CD8-positive, alpha-beta T cell (primary cell): ENCODE measurements at regions of chr2 and their contacts with region 1.

Region 1: GRCh38 chr2:200483729-200484198 is 26.1 kb downstream of the KCTD18 start:
- DNase-seq: no peak
- ATAC-seq: no peak
- H3K4me3 ChIP-seq: no peak overlapping the region
- H3K4me3 Mint-ChIP-seq: no peak overlapping the region
- H3K27ac ChIP-seq: no peak overlapping the region
- H3K27ac Mint-ChIP-seq: no peak overlapping the region
- H3K4me1 ChIP-seq: no peaks in the 10 kb centered on the region
- H3K4me1 Mint-ChIP-seq: peaks cover 3% of the 10 kb centered on the region
- H3K27me3 ChIP-seq: no peaks in the 10 kb centered on the region
- H3K27me3 Mint-ChIP-seq: peaks cover 5% of the 10 kb centered on the region
- CTCF ChIP-seq: no peak

Region 2: DNA sequence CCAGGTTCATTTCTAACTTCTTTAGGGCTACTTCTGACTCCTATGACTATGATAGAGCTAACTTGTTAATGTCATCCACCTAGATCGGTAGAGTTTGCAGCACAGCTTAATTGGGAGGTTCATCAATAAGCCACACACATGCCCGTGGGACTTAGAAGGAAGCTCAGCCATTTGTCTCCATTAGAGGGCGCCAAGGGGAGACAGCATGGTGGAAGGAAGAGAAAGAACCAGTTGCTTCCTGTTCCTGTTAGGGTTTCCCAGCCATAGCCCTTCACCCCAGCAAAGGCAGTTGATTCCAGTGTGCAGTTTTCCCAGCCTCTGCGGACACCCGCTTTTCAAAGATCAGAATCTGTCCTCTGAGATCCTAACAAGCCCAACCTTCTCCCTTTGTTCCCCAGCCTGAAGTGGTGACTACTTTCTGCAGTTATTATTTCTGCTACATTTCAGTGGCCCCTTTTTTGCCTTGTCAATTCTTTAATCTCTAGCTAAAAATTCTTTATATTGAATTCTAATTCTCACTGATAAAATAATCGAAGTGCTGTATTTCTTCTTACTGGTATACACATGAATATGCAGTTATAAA is 498.0 kb before region 1 on chr2:
- CTCF ChIA-PET with region 1: interaction called, 40 read pairs
- POLR2A ChIA-PET with region 1: no interaction called
- intact Hi-C with region 1: loop called (anchors 1 kb)
- DNase-seq: peak in 7 of 9 experiments; percentile 14 to 65 (median 35)
- ATAC-seq: peak; percentile 72
- H3K4me3 ChIP-seq: no peak overlapping the region
- H3K4me3 Mint-ChIP-seq: no peak overlapping the region
- H3K27ac ChIP-seq: no peak overlapping the region
- H3K27ac Mint-ChIP-seq: no peak overlapping the region
- H3K4me1 ChIP-seq: no peaks in the 10 kb centered on the region
- H3K4me1 Mint-ChIP-seq: peaks cover 5% of the 10 kb centered on the region
- H3K27me3 ChIP-seq: no peaks in the 10 kb centered on the region
- H3K27me3 Mint-ChIP-seq: no peaks in the 10 kb centered on the region
- CTCF ChIP-seq: peak; percentile 45

Region 3: DNA sequence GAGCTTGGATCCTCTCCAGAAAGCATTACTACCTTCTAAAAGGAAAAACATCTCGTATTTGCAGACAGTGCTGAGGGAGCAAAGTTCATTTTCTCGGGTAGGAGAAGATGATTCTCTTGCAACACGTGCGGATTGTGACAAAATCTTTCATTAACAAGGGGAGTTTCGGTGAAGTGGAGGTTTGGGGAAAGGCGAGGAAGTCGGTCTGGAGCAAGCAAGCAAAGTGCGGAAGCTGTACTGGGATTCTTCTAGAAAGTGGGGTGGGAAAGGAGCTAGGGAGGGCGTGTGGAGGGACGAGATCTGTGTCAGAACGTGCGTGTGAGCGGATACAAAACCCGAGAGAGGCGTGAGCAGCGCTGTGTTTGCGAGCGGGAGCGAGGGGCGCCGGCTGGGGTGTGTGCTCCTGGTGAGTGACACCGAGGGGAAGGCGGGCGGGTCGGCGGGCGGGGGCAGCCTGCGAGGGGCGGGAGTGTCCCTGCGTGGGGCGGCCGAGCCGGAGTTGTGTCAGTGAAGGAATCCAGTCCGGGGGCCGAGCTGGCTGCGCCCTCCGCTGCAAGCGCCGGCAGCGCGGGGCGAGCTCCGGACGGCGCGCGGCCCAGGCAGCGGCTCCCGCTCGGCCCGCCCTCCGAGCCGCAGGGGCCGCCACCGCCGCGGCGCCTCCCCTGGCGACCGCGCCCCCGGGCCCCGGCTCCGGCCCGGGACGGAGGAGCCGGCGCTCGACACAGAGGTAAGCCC is 177.4 kb before region 1 on chr2 and contains the start of gene SPATS2L:
- CTCF ChIA-PET with region 1: interaction called, 5 read pairs
- POLR2A ChIA-PET with region 1: no interaction called
- intact Hi-C with region 1: loop called in 1 of 2 experiments (anchors 2 kb)
- DNase-seq: peak in 8 of 9 experiments; percentile 28 to 55 (median 44)
- ATAC-seq: peak; percentile 66
- H3K4me3 ChIP-seq: peak within 1 kb of the TSS; percentile 48 to 53
- H3K4me3 Mint-ChIP-seq: peak within 1 kb of the TSS; percentile 91
- H3K27ac ChIP-seq: no peak within 1 kb of the TSS
- H3K27ac Mint-ChIP-seq: peak within 1 kb of the TSS; percentile 46
- H3K4me1 ChIP-seq: peaks cover 8% of the 10 kb centered on the region
- H3K4me1 Mint-ChIP-seq: peaks cover 11% of the 10 kb centered on the region
- H3K27me3 ChIP-seq: no peaks in the 10 kb centered on the region
- H3K27me3 Mint-ChIP-seq: peaks cover 46% of the 10 kb centered on the region
- CTCF ChIP-seq: no peak
- total RNA-seq, gene SPATS2L: 1.7 to 2.2 TPM

Region 4: GRCh38 chr2:200442471-200442870 is 41.3 kb before region 1 on chr2:
- CTCF ChIA-PET with region 1: interaction called, 14 read pairs
- POLR2A ChIA-PET with region 1: no interaction called
- intact Hi-C with region 1: no loop called
- DNase-seq: no peak
- ATAC-seq: no peak
- H3K4me3 ChIP-seq: no peak overlapping the region
- H3K4me3 Mint-ChIP-seq: no peak overlapping the region
- H3K27ac ChIP-seq: no peak overlapping the region
- H3K27ac Mint-ChIP-seq: no peak overlapping the region
- H3K4me1 ChIP-seq: no peaks in the 10 kb centered on the region
- H3K4me1 Mint-ChIP-seq: no peaks in the 10 kb centered on the region
- H3K27me3 ChIP-seq: no peaks in the 10 kb centered on the region
- H3K27me3 Mint-ChIP-seq: no peaks in the 10 kb centered on the region
- CTCF ChIP-seq: no peak